Activated T-helper 2 cell treated with anti-CD3 and anti-CD28 coated beads, Interferon-gamma antibody, Interleukin-2, Interleukin-4, amounts not matched to agents 10 μg/mL and 5 μg/mL and 100 μg/mL, durations not matched to agents 14 hours and 24 hours and 36 hours (primary cell): ENCODE measurements at regions of chr15 and their contacts with region 1.

Region 1: GRCh38 chr15:75625542-75626347 is at the start of gene SNUPN:
- DNase-seq: peak; percentile 88
- H3K4me3 Mint-ChIP-seq: peak within 1 kb of the TSS; percentile 92
- H3K27ac Mint-ChIP-seq: peak within 1 kb of the TSS; percentile 97
- H3K4me1 Mint-ChIP-seq: peaks cover 33% of the 10 kb centered on the region
- H3K27me3 Mint-ChIP-seq: no peaks in the 10 kb centered on the region
- total RNA-seq, gene SNUPN: 32.7 and 40.9 TPM in 2 replicates

Region 2: DNA sequence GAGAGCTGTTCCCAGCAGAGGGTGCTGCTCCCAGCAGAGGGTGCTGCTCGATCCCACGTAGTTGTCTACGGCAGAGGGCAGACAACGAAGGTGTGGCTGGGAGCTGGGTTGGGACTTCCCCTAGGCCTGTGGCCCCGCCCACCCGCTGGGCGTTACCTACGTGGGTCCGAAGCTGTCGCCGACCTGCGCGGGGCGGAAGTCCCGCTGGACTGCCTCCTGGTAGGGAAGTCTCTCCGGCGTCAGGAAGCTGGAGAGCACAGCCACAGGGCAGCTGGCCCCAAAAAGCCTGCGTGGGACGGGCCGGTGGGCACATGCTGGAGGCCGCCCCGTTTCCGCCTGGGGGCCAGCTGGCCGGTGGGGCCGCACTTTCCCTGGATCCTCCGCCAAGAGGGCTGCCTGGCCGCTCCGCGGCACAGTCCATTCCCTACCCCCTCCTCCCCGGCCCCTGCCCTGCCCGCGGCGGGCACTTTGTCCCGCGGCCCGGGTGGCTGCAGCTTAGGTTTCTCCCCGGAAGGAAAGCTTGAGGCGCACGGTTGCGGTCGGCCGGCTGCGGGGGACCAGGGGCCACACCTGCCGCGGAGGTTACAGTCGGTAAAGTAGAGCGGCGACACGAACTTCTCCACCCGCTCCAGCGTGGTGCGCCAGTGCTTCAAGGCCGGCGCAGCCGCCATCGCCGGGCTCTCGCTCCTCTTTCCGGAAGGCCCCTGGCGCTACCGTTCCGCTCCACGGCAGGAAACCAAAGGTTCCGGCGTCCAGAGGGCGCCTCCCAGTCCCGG is 257.6 kb before region 1 on chr15 and contains the start of gene MAN2C1:
- intact Hi-C with region 1: loop called (anchors 5 kb)
- DNase-seq: peak; percentile 92
- H3K4me3 Mint-ChIP-seq: peak within 1 kb of the TSS; percentile 89
- H3K27ac Mint-ChIP-seq: peak within 1 kb of the TSS; percentile 93
- H3K4me1 Mint-ChIP-seq: peaks cover 16% of the 10 kb centered on the region
- H3K27me3 Mint-ChIP-seq: no peaks in the 10 kb centered on the region
- total RNA-seq, gene MAN2C1: 233 and 240 TPM in 2 replicates

Region 3: DNA sequence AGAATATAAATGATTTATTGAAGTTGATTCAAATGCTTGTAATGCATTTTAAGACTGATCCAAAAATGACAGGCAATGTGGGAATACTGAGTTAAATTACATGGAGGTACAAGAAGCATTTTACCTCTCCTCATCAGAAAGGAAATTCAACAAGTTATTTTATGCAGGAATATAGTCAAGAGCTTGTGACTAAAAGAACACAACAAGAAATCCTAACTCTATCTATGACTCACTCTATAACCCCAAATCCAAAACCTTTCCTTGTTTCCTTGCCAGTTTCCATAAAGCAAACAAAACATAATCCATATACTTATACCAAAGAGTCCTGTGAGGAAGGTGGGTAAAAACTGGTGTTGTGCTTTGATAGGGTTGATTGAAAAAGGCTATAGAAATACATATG is 205.0 kb before region 1 on chr15:
- intact Hi-C with region 1: no loop called
- DNase-seq: no peak
- H3K4me3 Mint-ChIP-seq: no peak overlapping the region
- H3K27ac Mint-ChIP-seq: no peak overlapping the region
- H3K4me1 Mint-ChIP-seq: peaks cover 11% of the 10 kb centered on the region
- H3K27me3 Mint-ChIP-seq: no peaks in the 10 kb centered on the region

Region 4: DNA sequence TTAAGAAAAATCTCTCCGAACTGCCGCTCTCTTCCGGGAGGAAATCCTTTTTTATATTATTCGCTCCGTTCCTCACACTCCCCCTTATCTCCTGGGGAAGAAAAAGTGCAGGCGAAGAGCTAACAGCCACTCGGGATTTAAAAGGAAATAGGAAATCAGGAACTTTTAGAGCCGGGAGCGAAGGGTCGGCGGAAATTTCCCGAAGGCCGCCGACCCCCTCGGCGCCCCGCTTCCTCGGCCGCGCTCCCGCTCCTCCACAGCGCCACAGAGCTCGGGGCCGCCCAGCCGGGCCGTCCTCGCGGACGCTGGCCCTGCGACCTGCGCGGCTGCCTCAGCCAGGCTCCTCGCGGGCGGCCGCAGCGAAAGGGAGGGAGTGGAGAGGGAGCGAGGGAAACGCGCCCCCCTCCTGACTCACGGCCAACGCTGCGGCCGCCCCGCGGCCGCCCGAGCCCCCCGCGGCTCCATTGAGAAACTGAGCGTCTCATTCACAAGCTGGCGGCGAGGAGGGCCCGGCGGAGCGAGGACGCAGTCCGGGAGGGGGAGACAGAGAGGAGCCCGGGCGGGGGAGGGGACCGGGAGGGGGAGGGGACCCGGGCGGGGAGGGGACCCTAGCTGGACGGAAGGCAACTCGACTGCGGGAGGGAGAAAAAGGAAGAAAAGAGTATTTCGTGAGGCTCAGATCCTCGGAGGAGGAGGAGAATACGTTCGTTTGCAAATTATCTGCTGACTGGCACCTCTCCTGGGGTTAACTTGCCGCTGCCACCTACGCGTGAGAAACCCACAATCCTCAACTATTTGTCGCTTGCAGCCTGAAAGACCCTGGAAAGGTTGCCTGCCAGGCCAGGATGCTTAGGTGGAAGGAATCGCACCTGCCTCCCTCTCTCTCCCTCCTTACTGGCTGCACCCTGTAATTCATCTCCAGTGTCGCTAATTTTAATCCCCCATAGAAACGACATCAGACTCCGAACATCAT is 46.5 kb before region 1 on chr15 and contains the start of gene PTPN9:
- intact Hi-C with region 1: loop called (anchors 5 kb)
- DNase-seq: peak; percentile 63
- H3K4me3 Mint-ChIP-seq: peak within 1 kb of the TSS; percentile 91
- H3K27ac Mint-ChIP-seq: peak within 1 kb of the TSS; percentile 85
- H3K4me1 Mint-ChIP-seq: peaks cover 8% of the 10 kb centered on the region
- H3K27me3 Mint-ChIP-seq: no peaks in the 10 kb centered on the region
- total RNA-seq, gene PTPN9: 30.4 and 32.3 TPM in 2 replicates

Region 5: DNA sequence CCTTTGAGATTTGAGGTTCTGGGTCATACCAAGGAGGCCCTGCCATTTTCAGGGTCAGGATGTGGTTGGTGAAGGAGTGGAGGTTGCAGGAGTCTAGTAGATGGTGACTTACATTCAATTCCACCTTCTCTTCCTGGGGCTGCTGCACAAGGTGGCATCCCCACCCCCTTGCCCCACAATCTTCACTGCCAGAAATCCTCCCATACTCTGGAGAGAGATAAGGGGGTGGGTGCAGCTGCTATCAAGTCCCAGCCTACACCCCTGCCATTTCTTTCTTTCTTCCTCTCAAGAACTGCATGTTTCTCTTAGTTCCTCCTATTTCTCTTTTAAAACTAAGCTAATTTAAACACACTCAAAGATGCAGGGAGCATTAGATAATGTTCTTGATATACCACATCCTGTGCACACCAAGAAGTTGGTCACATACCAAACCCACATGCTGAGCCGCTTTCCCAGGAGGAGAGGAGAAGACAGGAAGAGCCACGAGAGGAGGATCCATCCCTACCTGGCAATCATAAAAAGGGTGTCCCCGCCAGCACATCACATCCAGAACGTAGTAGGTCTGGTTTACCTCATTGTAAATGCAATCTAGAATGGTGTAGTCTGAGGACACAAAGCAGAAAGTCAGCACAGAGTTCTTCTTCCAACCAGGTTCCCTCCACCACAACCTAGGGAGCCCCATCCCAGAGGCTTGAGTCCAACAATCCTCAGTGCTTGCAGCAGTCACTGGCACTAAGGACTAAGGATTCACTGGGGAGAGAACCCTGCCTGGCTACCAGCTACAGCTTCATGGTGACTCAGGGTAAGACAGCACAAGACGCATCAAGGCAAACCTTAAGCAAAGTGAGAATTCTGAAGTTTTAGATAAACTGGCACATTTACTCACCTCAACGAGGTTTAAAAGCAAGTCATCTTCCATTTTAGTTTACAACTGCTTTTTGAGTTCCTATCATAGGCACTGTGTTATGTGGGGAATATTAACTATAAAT is 18.7 kb before region 1 on chr15:
- intact Hi-C with region 1: loop called (anchors 2 kb)
- DNase-seq: peak; percentile 20
- H3K4me3 Mint-ChIP-seq: peak overlapping the region; percentile 65
- H3K27ac Mint-ChIP-seq: peak overlapping the region; percentile 93
- H3K4me1 Mint-ChIP-seq: peaks cover 36% of the 10 kb centered on the region
- H3K27me3 Mint-ChIP-seq: no peaks in the 10 kb centered on the region

Region 6: GRCh38 chr15:75801859-75802593 is 176.3 kb after region 1 on chr15:
- intact Hi-C with region 1: no loop called
- DNase-seq: peak; percentile 71
- H3K4me3 Mint-ChIP-seq: peak overlapping the region; percentile 52
- H3K27ac Mint-ChIP-seq: no peak overlapping the region
- H3K4me1 Mint-ChIP-seq: peaks cover 8% of the 10 kb centered on the region
- H3K27me3 Mint-ChIP-seq: peaks cover 64% of the 10 kb centered on the region